ENCODE measurements at regions of chr1 and their contacts with region 1.

Region 1: DNA sequence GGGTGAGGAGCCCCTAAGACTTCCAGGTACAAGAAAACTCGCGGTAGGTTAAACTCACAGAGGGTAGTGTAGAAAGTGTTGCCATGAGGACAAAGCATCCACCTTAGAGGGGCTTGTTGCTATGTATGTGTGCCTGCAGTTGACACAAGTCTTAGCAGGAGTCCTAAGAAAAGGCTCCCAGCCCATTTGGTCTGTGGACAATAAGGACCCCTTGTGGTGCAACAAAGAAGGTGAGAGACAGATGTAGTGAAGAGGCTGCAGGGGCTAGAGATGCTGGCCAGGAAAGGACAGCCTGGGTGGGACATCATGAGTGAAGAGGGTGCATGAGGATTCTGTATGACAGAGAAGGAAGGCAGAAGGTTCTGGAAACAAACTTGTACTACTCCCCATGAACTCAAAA is 36.3 kb upstream of the IL10 start:
- DNase-seq: peak; percentile 62
- ATAC-seq: peak; percentile 81
- H3K4me3 ChIP-seq: no peak overlapping the region
- H3K4me3 Mint-ChIP-seq: no peak overlapping the region
- H3K27ac ChIP-seq: no peak overlapping the region
- H3K27ac Mint-ChIP-seq: no peak overlapping the region
- H3K4me1 ChIP-seq: peaks cover 8 to 12% of the 10 kb centered on the region in 2 donors
- H3K4me1 Mint-ChIP-seq: peaks cover 27% of the 10 kb centered on the region
- H3K27me3 ChIP-seq: no peaks in the 10 kb centered on the region
- H3K27me3 Mint-ChIP-seq: no peaks in the 10 kb centered on the region
- CTCF ChIP-seq: peak; percentile 50

Region 2: DNA sequence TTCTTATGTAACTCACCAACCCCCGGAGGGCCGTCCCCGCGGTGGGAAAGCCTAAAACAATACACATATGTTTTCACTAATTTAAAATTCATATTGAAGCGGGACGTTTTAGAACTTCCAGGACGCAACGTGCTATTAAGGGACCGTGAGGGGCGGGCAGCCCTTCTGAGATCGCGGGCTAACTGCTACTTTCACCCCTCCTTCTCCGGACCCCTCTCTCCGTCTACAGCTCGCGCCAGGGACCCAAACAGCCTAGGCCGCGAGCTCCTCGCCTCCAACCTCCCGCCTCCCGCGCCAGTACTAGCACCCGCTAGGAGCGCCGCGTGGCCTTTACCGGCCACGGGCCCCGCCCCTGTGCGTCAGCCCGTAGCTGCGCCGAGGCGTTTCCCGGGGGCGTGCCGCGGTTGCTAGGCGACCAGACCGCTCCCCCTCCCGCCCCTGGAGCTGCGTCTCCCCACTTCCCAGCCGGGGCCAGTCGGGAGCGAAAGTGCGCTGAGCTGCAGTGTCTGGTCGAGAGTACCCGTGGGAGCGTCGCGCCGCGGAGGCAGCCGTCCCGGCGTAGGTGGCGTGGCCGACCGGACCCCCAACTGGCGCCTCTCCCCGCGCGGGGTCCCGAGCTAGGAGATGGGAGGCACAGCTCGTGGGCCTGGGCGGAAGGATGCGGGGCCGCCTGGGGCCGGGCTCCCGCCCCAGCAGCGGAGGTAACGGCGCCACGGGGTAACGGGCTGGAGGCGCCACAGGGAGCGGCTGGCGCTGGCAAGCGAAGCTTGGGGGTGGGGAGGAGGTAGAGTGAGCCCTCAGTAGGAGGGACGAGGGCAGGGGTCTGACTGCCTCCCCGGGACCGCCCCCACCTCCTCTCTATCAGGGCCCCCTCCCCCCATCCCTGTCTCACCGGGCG is 173.3 kb before region 1 on chr1 and contains the start of gene DYRK3:
- CTCF ChIA-PET with region 1: interaction called, 10 read pairs
- POLR2A ChIA-PET with region 1: no interaction called
- intact Hi-C with region 1: loop called (anchors 10 kb)
- DNase-seq: peak; percentile 89
- ATAC-seq: peak; percentile 93
- H3K4me3 ChIP-seq: peak within 1 kb of the TSS; percentile 54 to 77 (median 67)
- H3K4me3 Mint-ChIP-seq: peak within 1 kb of the TSS; percentile 92
- H3K27ac ChIP-seq: no peak within 1 kb of the TSS
- H3K27ac Mint-ChIP-seq: peak within 1 kb of the TSS; percentile 74
- H3K4me1 ChIP-seq: peaks cover 17 to 22% of the 10 kb centered on the region in 2 donors
- H3K4me1 Mint-ChIP-seq: peaks cover 29% of the 10 kb centered on the region
- H3K27me3 ChIP-seq: peaks cover 0 to 11% (median 7%) of the 10 kb centered on the region in 4 experiments
- H3K27me3 Mint-ChIP-seq: peaks cover 7% of the 10 kb centered on the region
- CTCF ChIP-seq: no peak
- total RNA-seq, gene DYRK3: 0.30 and 0.80 TPM in 2 replicates

Region 3: GRCh38 chr1:206725109-206725963 is 83.3 kb before region 1 on chr1:
- CTCF ChIA-PET with region 1: interaction called, 85 read pairs
- POLR2A ChIA-PET with region 1: no interaction called
- intact Hi-C with region 1: loop called (anchors 2 kb)
- DNase-seq: peak; percentile 68
- ATAC-seq: peak; percentile 46
- H3K4me3 ChIP-seq: no peak overlapping the region
- H3K4me3 Mint-ChIP-seq: peak overlapping the region; percentile 18
- H3K27ac ChIP-seq: no peak overlapping the region
- H3K27ac Mint-ChIP-seq: peak overlapping the region; percentile 65
- H3K4me1 ChIP-seq: peaks cover 32 to 33% of the 10 kb centered on the region in 2 donors
- H3K4me1 Mint-ChIP-seq: peaks cover 60% of the 10 kb centered on the region
- H3K27me3 ChIP-seq: no peaks in the 10 kb centered on the region
- H3K27me3 Mint-ChIP-seq: no peaks in the 10 kb centered on the region
- CTCF ChIP-seq: peak; percentile 28

Region 4: DNA sequence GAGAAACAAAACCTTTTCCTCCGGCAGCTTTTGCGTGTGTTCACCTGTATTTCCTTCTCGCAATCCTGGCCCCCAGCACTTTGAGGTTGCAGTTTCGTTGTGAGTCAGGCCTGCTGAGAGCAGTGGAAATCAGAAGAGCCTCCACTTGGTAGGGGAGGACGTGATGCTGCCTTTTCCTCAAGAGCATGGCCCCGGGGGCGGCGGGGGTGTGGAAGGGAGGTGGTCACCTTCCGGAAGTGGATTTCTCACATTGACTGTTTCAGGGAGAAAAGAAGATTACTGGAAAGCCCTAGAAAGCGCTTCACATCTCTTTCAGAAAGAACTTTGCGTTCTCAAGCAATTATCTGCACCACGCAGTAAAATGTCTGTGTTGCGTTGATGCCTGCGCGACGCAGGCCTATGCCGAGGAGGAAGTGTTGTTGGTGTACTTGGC is 24.1 kb before region 1 on chr1:
- CTCF ChIA-PET with region 1: interaction called, 36 read pairs
- POLR2A ChIA-PET with region 1: no interaction called
- intact Hi-C with region 1: loop called (anchors 1 kb)
- DNase-seq: peak; percentile 78
- ATAC-seq: peak; percentile 64
- H3K4me3 ChIP-seq: no peak overlapping the region
- H3K4me3 Mint-ChIP-seq: peak overlapping the region; percentile 85
- H3K27ac ChIP-seq: no peak overlapping the region
- H3K27ac Mint-ChIP-seq: peak overlapping the region; percentile 94
- H3K4me1 ChIP-seq: peaks cover 56% of the 10 kb centered on the region in 2 donors
- H3K4me1 Mint-ChIP-seq: peaks cover 61% of the 10 kb centered on the region
- H3K27me3 ChIP-seq: no peaks in the 10 kb centered on the region
- H3K27me3 Mint-ChIP-seq: no peaks in the 10 kb centered on the region
- CTCF ChIP-seq: no peak

Region 5: GRCh38 chr1:206834711-206835110 is 26.1 kb after region 1 on chr1:
- CTCF ChIA-PET with region 1: interaction called, 36 read pairs
- POLR2A ChIA-PET with region 1: no interaction called
- intact Hi-C with region 1: no loop called
- DNase-seq: no peak
- ATAC-seq: no peak
- H3K4me3 ChIP-seq: no peak overlapping the region
- H3K4me3 Mint-ChIP-seq: no peak overlapping the region
- H3K27ac ChIP-seq: no peak overlapping the region
- H3K27ac Mint-ChIP-seq: no peak overlapping the region
- H3K4me1 ChIP-seq: peaks cover 49 to 51% of the 10 kb centered on the region in 2 donors
- H3K4me1 Mint-ChIP-seq: peaks cover 49% of the 10 kb centered on the region
- H3K27me3 ChIP-seq: no peaks in the 10 kb centered on the region
- H3K27me3 Mint-ChIP-seq: peaks cover 12% of the 10 kb centered on the region
- CTCF ChIP-seq: no peak

Region 6: DNA sequence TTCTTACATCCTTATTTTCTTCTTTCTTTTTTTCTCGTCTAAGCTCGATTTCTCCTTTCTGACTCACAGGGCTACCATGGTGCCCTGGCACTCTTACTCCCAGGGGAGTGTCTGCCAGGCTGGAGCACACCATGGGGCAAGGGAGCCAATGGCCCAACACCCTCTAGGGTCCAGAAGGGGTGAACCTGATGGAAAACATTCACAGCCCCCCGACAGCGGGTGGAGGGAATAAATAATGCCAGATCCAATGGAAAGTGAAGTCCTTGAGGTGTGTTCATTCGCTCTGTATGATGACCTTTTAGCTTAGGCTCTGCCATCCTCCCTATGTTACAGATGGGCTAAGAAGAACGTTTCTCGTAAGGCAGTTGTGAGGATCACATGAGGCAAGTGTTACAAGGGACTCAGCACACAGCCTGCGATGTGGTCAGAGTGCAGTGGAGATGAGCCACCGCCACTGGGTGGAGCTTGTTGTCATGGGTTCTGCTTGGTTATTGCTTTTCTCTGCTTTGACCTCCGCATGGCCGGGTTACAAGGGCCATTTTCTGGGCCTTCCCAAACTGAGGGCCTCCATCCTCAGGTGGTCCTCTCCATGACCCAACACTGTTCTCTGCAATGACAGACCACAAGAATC is 116.6 kb after region 1 on chr1:
- CTCF ChIA-PET with region 1: interaction called, 78 read pairs
- POLR2A ChIA-PET with region 1: interaction called, 5 read pairs
- intact Hi-C with region 1: no loop called
- DNase-seq: peak; percentile 84
- ATAC-seq: peak; percentile 53
- H3K4me3 ChIP-seq: peak overlapping the region in 1 of 5 experiments; percentile 17
- H3K4me3 Mint-ChIP-seq: no peak overlapping the region
- H3K27ac ChIP-seq: peak overlapping the region; percentile 88 to 96
- H3K27ac Mint-ChIP-seq: no peak overlapping the region
- H3K4me1 ChIP-seq: peaks cover 82 to 84% of the 10 kb centered on the region in 2 donors
- H3K4me1 Mint-ChIP-seq: peaks cover 37% of the 10 kb centered on the region
- H3K27me3 ChIP-seq: no peaks in the 10 kb centered on the region
- H3K27me3 Mint-ChIP-seq: no peaks in the 10 kb centered on the region
- CTCF ChIP-seq: peak; percentile 19